ENCODE measurements at regions of chr4 and their contacts with region 1.

Region 1: DNA sequence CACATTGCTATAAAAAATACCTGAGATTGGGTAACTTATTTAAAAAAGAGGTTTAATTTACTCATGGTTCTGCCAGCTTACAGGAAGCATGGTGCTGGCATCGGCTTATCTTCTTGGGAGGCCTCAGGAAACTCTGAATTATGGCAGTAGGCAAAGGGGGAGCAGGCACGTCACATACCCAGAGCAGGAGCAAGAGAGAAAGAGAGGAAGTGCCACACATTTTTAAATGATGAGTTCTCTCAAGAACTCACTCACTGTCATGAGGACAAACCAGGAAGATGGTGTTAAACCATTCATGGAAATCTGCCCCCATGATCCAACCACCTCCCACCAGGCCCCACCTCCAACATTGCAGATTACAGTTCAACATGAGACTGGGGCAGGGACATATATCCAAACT is 10.0 kb upstream of the AFF1 start:
- DNase-seq: no peak
- ATAC-seq: no peak
- H3K4me3 ChIP-seq: no peak overlapping the region
- H3K4me3 Mint-ChIP-seq: no peak overlapping the region
- H3K27ac ChIP-seq: no peak overlapping the region
- H3K27ac Mint-ChIP-seq: no peak overlapping the region
- H3K4me1 ChIP-seq: peaks cover 2% of the 10 kb centered on the region
- H3K4me1 Mint-ChIP-seq: peaks cover 4% of the 10 kb centered on the region
- H3K27me3 ChIP-seq: no peaks in the 10 kb centered on the region
- H3K27me3 Mint-ChIP-seq: no peaks in the 10 kb centered on the region
- CTCF ChIP-seq: no peak

Region 2: DNA sequence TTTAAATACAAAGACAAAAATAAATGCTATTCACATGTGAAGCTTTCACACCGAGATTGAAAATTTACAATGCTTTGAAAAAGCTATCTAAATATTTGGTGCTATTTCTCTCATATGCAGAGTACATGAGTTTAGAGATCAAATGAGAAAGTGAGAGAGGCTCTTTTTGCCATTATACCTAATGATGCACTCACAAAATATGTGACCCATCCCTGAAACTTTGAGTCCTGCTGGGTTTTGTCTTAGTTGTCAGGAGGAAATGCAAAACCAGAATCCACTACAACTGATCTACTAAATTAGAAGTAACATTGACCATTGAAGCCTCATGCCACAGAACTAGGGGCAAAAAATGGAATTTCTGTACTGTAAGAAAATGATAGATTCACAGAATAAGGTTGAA is 816.7 kb before region 1 on chr4:
- CTCF ChIA-PET with region 1: no interaction called
- POLR2A ChIA-PET with region 1: no interaction called
- intact Hi-C with region 1: no loop called
- DNase-seq: no peak
- ATAC-seq: no peak
- H3K4me3 ChIP-seq: no peak overlapping the region
- H3K4me3 Mint-ChIP-seq: no peak overlapping the region
- H3K27ac ChIP-seq: no peak overlapping the region
- H3K27ac Mint-ChIP-seq: no peak overlapping the region
- H3K4me1 ChIP-seq: no peaks in the 10 kb centered on the region
- H3K4me1 Mint-ChIP-seq: no peaks in the 10 kb centered on the region
- H3K27me3 ChIP-seq: no peaks in the 10 kb centered on the region
- H3K27me3 Mint-ChIP-seq: no peaks in the 10 kb centered on the region
- CTCF ChIP-seq: no peak

Region 3: GRCh38 chr4:86944964-86945781 is 20.4 kb after region 1 on chr4:
- CTCF ChIA-PET with region 1: interaction called, 15 read pairs
- POLR2A ChIA-PET with region 1: interaction called, 4 read pairs
- intact Hi-C with region 1: no loop called
- DNase-seq: no peak
- ATAC-seq: no peak
- H3K4me3 ChIP-seq: no peak overlapping the region
- H3K4me3 Mint-ChIP-seq: no peak overlapping the region
- H3K27ac ChIP-seq: no peak overlapping the region
- H3K27ac Mint-ChIP-seq: no peak overlapping the region
- H3K4me1 ChIP-seq: peaks cover 26% of the 10 kb centered on the region
- H3K4me1 Mint-ChIP-seq: peaks cover 49% of the 10 kb centered on the region
- H3K27me3 ChIP-seq: no peaks in the 10 kb centered on the region
- H3K27me3 Mint-ChIP-seq: no peaks in the 10 kb centered on the region
- CTCF ChIP-seq: no peak

Region 4: DNA sequence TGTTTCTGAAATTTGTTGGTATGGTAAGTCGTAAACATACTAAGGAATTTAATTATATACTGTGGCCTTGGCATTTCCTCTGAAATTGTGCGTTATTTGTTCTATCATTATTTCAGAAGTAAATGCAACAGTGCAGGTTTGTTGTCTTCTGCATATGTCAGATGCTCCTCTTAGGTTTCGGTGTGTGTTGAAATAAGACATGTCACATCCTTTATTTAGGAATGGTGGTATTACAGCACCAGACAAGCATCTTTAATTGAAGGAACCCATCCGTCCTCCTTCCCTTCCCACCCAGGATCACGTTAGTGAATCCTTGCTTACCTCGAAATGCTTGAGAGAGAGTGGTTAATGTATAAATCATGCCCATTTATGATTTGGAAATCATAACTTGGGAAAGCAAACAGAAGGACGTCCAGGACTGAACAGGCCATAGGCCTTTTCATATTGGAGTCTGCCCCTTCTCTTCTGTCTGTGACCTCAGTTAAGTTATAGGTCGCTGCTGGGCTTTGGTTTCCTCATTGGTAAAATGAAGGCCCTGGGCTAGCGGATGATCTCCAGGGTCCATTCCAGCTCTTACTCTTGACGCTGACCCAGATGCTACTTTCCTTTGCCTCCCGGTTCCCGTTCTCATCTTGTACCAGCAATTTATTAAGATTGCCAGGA is 161.5 kb after region 1 on chr4:
- CTCF ChIA-PET with region 1: interaction called, 112 read pairs
- POLR2A ChIA-PET with region 1: interaction called, 34 read pairs
- intact Hi-C with region 1: no loop called
- DNase-seq: no peak
- ATAC-seq: no peak
- H3K4me3 ChIP-seq: no peak overlapping the region
- H3K4me3 Mint-ChIP-seq: no peak overlapping the region
- H3K27ac ChIP-seq: no peak overlapping the region
- H3K27ac Mint-ChIP-seq: peak overlapping the region; percentile 9
- H3K4me1 ChIP-seq: no peaks in the 10 kb centered on the region
- H3K4me1 Mint-ChIP-seq: peaks cover 36% of the 10 kb centered on the region
- H3K27me3 ChIP-seq: no peaks in the 10 kb centered on the region
- H3K27me3 Mint-ChIP-seq: no peaks in the 10 kb centered on the region
- CTCF ChIP-seq: no peak

Region 5: DNA sequence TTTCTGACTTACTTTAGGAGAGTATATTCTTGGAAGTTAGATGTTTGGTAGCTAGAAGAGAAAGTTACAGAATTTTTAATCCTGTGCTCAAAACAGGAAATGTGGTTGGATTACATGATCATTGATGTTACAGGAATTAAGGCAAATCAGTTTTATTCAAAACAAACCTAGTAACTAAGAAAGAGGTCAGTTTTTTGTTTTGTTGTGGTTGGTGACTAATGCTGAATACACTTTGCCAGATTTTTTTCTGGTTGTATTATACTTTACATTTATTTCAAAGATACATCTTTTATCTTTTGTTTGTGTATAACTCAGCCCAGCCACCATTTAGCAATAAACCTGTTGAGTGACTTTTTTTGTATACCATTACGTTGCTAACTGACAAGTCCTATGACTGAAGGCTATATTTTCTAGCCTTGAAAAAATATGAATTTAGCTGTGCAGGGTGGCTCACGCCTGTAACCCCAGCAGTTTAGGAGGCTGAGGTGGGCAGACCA is 178.9 kb after region 1 on chr4:
- CTCF ChIA-PET with region 1: interaction called, 17 read pairs
- POLR2A ChIA-PET with region 1: interaction called, 4 read pairs
- intact Hi-C with region 1: no loop called
- DNase-seq: peak in 4 of 14 experiments; percentile 8 to 75 (median 70)
- ATAC-seq: peak; percentile 77
- H3K4me3 ChIP-seq: no peak overlapping the region
- H3K4me3 Mint-ChIP-seq: peak overlapping the region; percentile 78
- H3K27ac ChIP-seq: peak overlapping the region; percentile 78 to 88
- H3K27ac Mint-ChIP-seq: peak overlapping the region; percentile 93
- H3K4me1 ChIP-seq: peaks cover 16% of the 10 kb centered on the region
- H3K4me1 Mint-ChIP-seq: peaks cover 67% of the 10 kb centered on the region
- H3K27me3 ChIP-seq: no peaks in the 10 kb centered on the region
- H3K27me3 Mint-ChIP-seq: no peaks in the 10 kb centered on the region
- CTCF ChIP-seq: no peak

Region 6: DNA sequence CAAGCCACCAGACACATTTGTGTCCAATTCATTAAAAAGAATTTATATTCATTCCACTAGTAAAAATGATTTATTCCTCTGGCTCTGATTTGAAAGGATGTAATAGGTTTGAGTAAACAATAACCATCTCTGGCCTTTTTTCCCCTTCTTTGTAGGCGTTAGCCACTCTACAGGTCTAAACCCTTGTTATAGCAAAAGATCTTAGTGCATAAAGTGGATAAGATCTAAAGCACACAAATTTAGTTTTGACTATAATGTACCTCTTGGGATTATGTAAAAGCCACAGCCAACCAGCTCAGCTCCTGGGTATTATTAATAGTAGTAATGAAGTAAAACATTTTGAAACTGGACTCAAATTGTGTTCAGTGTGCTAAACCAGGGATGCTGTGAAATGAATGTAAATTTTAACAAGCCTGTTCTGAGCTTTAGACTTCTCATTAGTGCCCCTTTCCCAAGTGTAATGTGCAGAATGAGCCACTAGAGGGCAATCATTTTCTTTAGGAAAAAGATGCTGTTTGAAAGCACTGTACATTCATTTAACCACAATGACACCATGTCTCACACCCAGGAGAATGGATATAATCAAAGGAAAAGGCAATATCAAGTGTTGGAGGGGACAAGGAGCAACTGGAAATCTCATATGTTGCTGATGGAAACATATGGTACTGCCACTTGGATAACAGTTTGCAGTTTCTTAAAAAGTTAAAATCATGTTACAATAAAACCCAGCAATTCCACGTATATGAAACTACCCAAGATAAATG is 225.9 kb after region 1 on chr4:
- CTCF ChIA-PET with region 1: interaction called, 6 read pairs
- POLR2A ChIA-PET with region 1: no interaction called
- intact Hi-C with region 1: loop called in 1 of 2 experiments (anchors 1 kb)
- DNase-seq: peak in 10 of 14 experiments; percentile 14 to 79 (median 42)
- ATAC-seq: peak; percentile 84
- H3K4me3 ChIP-seq: no peak overlapping the region
- H3K4me3 Mint-ChIP-seq: no peak overlapping the region
- H3K27ac ChIP-seq: no peak overlapping the region
- H3K27ac Mint-ChIP-seq: no peak overlapping the region
- H3K4me1 ChIP-seq: no peaks in the 10 kb centered on the region
- H3K4me1 Mint-ChIP-seq: no peaks in the 10 kb centered on the region
- H3K27me3 ChIP-seq: no peaks in the 10 kb centered on the region
- H3K27me3 Mint-ChIP-seq: no peaks in the 10 kb centered on the region
- CTCF ChIP-seq: peak; percentile 97